T-cell (primary cell): ENCODE measurements at regions of chr16 and their contacts with region 1.

Region 1: GRCh38 chr16:11446566-11447119 is 101.4 kb downstream of the RMI2 start:
- DNase-seq: no peak
- ATAC-seq: no peak
- H3K4me3 ChIP-seq: no peak overlapping the region
- H3K4me3 Mint-ChIP-seq: no peak overlapping the region
- H3K27ac ChIP-seq: no peak overlapping the region
- H3K27ac Mint-ChIP-seq: no peak overlapping the region
- H3K4me1 ChIP-seq: no peaks in the 10 kb centered on the region
- H3K4me1 Mint-ChIP-seq: no peaks in the 10 kb centered on the region
- H3K27me3 ChIP-seq: no peaks in the 10 kb centered on the region
- H3K27me3 Mint-ChIP-seq: no peaks in the 10 kb centered on the region

Region 2: GRCh38 chr16:11315510-11315909 is 131.1 kb before region 1 on chr16:
- CTCF ChIA-PET with region 1: no interaction called
- POLR2A ChIA-PET with region 1: no interaction called
- DNase-seq: no peak
- ATAC-seq: no peak
- H3K4me3 ChIP-seq: no peak overlapping the region
- H3K4me3 Mint-ChIP-seq: no peak overlapping the region
- H3K27ac ChIP-seq: no peak overlapping the region
- H3K27ac Mint-ChIP-seq: no peak overlapping the region
- H3K4me1 ChIP-seq: peaks cover 14 to 26% of the 10 kb centered on the region in 2 experiments
- H3K4me1 Mint-ChIP-seq: peaks cover 25 to 33% (median 33%) of the 10 kb centered on the region in 3 donors
- H3K27me3 ChIP-seq: no peaks in the 10 kb centered on the region
- H3K27me3 Mint-ChIP-seq: no peaks in the 10 kb centered on the region

Region 3: DNA sequence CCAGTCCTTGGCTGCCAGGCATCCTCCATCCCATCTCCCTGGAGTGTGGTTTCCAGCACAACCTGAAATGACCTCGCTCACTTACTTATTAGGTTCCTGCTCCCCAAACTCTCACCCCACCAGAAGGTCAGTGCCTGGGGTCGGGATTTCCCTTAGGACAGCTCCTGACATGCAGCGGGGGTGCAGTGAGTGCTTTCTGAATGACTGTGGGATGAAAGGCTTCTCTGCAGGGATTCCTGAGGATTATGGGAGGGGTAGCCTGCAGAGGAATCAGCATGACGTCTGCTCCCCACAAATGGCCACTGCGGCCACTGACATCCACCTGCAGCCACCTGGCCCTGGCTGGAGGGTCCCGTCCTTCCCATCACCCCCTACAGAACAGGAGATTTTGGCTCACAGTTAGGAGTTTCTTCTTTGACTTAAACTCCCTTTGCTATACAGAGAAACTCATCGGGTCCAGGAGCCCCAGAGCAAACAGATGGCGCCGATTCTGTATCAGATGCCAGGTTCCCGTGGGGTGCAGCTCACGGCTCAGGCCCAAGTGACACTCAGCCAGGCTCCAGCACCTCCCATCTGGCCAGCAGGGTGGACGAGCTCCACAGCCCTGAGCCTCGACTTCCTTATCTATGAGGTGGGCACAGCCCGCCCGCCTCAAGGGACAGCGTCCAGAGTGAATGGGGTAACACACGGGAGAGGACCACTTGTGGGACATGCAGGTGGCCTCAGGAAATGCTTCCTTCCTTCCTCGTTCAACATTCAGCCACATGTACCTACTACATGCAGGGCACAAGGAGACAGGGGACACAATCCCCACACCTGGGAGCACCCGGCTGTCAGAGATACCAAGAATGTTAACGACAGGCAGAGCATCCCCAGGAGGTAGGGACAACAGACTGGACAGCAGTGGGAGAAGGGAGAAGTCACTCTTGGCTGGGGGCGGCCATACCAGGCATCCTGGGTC is 31.5 kb before region 1 on chr16:
- CTCF ChIA-PET with region 1: interaction called in 1 of 2 experiments, 10 read pairs
- POLR2A ChIA-PET with region 1: no interaction called
- DNase-seq: no peak
- ATAC-seq: no peak
- H3K4me3 ChIP-seq: no peak overlapping the region
- H3K4me3 Mint-ChIP-seq: no peak overlapping the region
- H3K27ac ChIP-seq: no peak overlapping the region
- H3K27ac Mint-ChIP-seq: no peak overlapping the region
- H3K4me1 ChIP-seq: no peaks in the 10 kb centered on the region
- H3K4me1 Mint-ChIP-seq: no peaks in the 10 kb centered on the region
- H3K27me3 ChIP-seq: peaks cover 0 to 2% of the 10 kb centered on the region in 2 experiments
- H3K27me3 Mint-ChIP-seq: no peaks in the 10 kb centered on the region

Region 4: DNA sequence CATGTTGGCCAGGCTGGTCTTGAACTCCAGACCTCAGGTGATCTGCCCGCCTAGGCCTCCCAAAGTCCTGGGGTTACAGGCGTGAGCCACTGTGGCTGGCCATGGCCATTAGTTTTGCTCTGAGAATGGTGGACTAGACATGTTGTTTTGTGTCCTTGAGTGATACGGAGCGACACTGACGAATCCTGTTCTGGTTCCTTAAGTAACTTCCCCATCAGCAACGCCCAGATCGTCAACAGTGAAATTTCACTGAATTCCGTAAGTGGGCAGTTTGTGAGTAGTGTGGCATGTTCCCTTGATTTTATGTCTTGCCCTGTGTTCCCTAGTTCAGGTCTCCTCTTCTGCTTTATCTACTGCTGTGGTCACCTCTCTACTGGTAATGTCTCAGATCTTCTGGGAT is 597.3 kb after region 1 on chr16:
- CTCF ChIA-PET with region 1: no interaction called
- POLR2A ChIA-PET with region 1: no interaction called
- DNase-seq: no peak
- ATAC-seq: no peak
- H3K4me3 ChIP-seq: no peak overlapping the region
- H3K4me3 Mint-ChIP-seq: no peak overlapping the region
- H3K27ac ChIP-seq: no peak overlapping the region
- H3K27ac Mint-ChIP-seq: no peak overlapping the region
- H3K4me1 ChIP-seq: no peaks in the 10 kb centered on the region
- H3K4me1 Mint-ChIP-seq: no peaks in the 10 kb centered on the region
- H3K27me3 ChIP-seq: no peaks in the 10 kb centered on the region
- H3K27me3 Mint-ChIP-seq: no peaks in the 10 kb centered on the region